Right ventricle myocardium inferior (tissue), 1 donor: ENCODE measurements at regions of chr18 and their contacts with region 1.

Region 1: GRCh38 chr18:63317982-63318881 is 1.3 kb downstream of the BCL2 start:
- DNase-seq: peak; percentile 75
- ATAC-seq: no peak

Region 2: GRCh38 chr18:63016270-63016669 is 302.0 kb before region 1 on chr18:
- intact Hi-C with region 1: loop called (anchors 1 kb)
- DNase-seq: peak; percentile 43
- ATAC-seq: no peak

Region 3: GRCh38 chr18:63025251-63026090 is 292.8 kb before region 1 on chr18:
- intact Hi-C with region 1: loop called (anchors 1 kb)
- DNase-seq: peak; percentile 39
- ATAC-seq: peak; percentile 69

Region 4: GRCh38 chr18:63119647-63120046 is 198.6 kb before region 1 on chr18:
- intact Hi-C with region 1: no loop called
- DNase-seq: no peak
- ATAC-seq: peak; percentile 64

Region 5: DNA sequence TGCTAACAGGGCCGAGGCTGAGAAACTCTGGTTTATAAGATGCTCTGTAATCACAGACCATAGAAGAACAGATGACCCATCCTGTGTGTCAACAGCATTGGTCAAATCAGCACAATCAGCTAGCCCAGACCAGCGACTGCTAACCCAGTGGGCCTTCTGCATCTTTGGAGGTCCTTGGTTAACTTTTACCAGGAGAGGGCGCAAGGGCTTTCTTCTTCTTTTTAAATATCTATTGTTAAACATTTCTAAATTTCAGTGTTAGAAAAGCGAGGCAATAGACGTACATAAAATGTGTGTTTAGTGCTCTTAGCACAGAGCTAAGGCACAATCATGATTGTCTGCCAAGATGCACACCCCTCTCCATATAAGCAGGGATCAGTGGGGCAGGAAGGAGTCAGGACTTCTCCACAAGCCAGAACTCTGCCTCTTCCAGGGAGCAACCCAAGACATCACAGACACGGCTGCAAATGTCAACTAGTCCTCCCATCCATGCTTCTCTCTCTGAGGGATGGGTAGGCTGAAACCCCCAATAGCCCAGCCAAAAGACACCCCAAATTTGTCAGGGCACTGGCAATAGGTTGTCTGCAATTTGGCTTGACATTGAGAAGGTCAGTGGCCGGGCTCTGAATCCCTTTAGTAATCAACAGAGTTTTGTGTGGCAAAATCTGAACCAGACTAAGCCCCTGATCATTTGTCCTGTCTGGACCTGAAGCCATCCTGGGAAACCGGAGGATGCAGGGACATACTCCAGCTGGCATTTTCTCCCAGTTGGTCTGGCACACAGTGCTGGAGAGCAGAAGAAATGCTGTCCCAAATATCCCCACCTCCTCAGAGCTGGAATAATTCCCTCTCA is 186.9 kb before region 1 on chr18:
- intact Hi-C with region 1: loop called (anchors 1 kb)
- DNase-seq: no peak
- ATAC-seq: peak; percentile 40

Region 6: DNA sequence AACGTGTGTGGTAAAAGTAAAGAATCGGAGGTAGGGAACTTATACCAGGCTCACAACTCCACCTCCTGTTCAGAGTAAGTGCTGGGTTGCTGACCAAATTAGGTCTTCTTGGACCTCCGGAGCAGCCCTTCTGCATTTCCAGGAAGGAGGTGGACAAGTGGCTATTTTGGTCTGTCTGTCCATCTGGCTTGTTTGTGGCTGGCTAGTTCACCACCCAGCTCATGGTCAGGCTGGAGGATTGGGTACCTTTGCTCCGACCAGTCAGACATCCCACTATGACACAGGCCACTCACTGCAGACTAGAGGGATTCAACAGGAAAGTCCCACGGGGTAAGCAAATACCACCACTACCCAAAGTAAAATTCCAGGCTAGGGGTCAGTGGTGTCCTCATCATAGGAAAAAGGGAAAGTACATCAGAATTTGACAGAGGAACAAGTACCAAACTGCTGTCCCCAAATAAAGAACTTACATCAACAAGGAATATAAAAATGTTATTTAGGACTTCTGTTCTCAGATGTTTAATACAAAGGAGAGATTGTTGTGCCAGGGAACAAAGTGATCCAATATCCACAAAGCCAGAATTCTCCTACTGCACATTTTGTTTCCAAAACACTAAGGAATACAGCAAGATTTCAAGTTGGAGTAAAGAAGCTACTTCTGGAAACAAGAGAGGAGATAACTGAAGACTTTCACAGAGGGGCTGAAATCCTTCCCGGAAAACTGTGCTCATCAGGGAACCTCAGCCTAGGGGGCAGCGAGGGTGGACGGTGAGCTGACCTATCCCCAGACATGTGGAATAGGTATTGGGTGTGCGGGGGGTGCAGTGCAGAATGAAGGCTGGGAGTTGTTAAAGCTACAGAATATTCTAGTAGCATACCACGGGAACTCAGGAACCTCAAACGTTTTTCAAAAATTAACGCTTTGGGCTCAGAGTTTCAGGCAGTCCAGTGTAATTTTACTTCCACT is 55.6 kb before region 1 on chr18:
- intact Hi-C with region 1: loop called (anchors 5 kb)
- DNase-seq: no peak
- ATAC-seq: peak; percentile 79

Region 7: GRCh38 chr18:63284827-63285733 is 33.2 kb before region 1 on chr18:
- intact Hi-C with region 1: loop called (anchors 5 kb)
- DNase-seq: no peak
- ATAC-seq: peak; percentile 32